ENCODE measurements at regions of chr6 and their contacts with region 1.

Region 1: DNA sequence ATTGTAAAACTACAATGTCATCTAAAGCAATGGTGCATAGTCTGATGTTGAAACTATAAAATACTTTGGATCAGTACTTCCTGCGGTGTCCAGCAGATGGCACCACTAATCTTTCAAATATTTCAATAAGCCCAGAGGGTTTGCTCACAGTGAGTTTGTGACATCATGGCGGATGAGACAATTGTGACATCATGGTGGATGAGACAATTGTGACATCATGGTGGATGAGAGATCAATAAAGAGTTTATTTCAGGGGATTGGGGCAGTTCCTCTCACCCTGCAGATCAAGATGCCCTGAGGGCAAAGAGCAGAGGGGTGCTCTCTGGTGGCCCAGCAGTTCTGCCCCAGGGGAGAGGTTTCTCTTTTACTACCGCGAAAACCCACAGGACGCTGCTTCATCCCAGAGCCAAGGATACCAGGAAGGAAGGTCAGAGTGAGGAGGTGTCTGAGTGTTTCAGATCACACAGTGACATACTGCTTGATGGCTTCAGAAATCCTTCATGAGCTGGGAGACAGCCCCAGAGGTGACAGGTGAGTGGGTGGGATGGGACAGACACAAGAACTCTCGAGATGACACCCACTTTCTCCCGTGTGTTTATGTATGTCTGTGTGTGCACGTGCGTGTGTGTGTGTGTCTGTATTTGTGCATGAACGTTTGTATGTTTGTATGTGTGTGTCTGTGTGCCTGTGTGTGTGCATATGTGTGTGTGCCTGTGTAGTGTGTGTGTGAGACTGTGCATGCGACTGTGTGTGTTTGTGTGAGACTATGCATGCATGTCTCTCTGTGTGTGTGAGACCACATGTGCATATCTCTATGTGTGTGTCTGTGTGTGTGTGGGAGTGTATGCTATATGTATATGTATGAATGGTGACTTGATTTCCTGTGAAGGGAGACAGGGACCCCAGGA is 7.3 kb upstream of the ULBP2 start:
- DNase-seq: peak; percentile 89
- H3K4me3 ChIP-seq: no peak overlapping the region
- H3K27ac ChIP-seq: no peak overlapping the region
- H3K4me1 ChIP-seq: 0 out of 2 replicates have a peak, but pooled peaks cover 5% of the 10 kb centered on the region
- H3K27me3 ChIP-seq: 0 out of 2 replicates have a peak, but pooled peaks cover 4% of the 10 kb centered on the region

Region 2: DNA sequence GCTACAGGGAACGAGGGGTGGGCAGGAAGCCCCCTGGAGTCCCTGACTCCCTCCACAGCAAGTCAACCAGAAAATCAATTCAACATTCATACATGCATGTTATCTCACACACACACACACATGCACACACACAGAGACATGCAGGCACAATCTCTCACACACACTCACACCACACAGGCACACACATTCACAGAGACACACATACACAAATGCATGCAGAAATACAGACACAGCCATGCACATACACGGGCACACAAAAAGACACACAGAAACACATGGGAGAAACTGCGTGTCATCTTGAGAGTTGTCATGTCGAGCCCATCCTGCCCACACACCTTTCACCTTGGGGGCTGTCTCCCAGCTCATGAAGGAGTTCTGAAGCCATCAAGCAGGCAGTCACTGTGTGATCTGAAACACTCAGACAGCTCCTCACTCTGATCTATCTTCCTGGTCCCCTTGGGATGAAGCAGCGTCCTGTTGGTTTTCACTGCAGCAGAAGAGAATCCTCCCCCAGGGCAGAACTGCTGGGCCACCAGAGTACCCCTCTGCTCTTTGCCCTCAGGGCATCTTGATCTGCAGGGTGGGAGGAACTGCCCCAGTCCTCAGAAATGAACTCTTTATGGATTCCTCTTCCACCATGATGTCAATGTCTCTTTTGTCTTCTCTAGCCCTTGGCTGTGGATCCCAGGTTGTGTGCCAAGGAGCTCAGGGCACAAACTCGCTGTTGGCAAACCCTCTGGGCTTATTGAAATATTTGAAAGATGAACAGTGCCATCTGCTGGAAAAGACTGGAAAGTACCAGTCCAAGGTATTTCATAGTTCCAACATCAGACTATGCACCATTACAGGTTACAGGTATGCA is 82.1 kb after region 1 on chr6:
- in situ Hi-C with region 1: loop called (anchors 10 kb)
- DNase-seq: peak; percentile 86
- H3K4me3 ChIP-seq: no peak overlapping the region
- H3K27ac ChIP-seq: no peak overlapping the region
- H3K4me1 ChIP-seq: no peaks in the 10 kb centered on the region
- H3K27me3 ChIP-seq: peaks cover 47% of the 10 kb centered on the region

Measured in GM23248 (cell line).